ENCODE measurements at regions of chr1 and their contacts with region 1.

Region 1: GRCh38 chr1:160951443-160952128 is 3.0 kb downstream of the ITLN2 start:
- DNase-seq: peak; percentile 82
- H3K4me3 Mint-ChIP-seq: no peak overlapping the region
- H3K27ac Mint-ChIP-seq: peak overlapping the region; percentile 3
- H3K4me1 Mint-ChIP-seq: peaks cover 55% of the 10 kb centered on the region
- H3K27me3 Mint-ChIP-seq: no peaks in the 10 kb centered on the region
- CTCF ChIP-seq: peak; percentile 93

Region 2: DNA sequence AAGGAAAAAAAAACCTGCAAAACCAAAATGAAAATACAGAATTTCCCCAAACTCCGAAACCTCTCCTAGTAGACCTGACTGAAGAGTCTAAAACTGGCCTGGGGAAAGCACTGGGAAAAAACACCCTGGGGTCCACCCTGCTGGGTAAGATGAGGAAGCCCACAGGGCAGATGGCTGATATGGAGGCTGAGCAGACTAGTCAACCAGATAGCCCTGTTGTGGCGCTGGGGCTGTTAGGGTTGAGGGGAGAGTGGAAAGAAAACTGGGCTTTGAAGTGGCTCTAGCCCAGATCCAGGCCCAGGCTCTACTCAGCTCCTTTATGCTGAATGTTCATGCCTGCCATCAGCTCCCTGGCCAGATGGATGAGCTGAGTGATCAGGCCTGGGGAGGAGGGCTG is 298.0 kb before region 1 on chr1:
- CTCF ChIA-PET with region 1: no interaction called
- POLR2A ChIA-PET with region 1: no interaction called
- intact Hi-C with region 1: no loop called
- DNase-seq: no peak
- H3K4me3 Mint-ChIP-seq: no peak overlapping the region
- H3K27ac Mint-ChIP-seq: no peak overlapping the region
- H3K4me1 Mint-ChIP-seq: peaks cover 20% of the 10 kb centered on the region
- H3K27me3 Mint-ChIP-seq: no peaks in the 10 kb centered on the region
- CTCF ChIP-seq: no peak

Region 3: GRCh38 chr1:160726498-160727315 is 224.9 kb before region 1 on chr1:
- CTCF ChIA-PET with region 1: interaction called, 68 read pairs
- POLR2A ChIA-PET with region 1: interaction called, 27 read pairs
- intact Hi-C with region 1: loop called (anchors 1 kb)
- DNase-seq: peak; percentile 90
- H3K4me3 Mint-ChIP-seq: no peak overlapping the region
- H3K27ac Mint-ChIP-seq: no peak overlapping the region
- H3K4me1 Mint-ChIP-seq: no peaks in the 10 kb centered on the region
- H3K27me3 Mint-ChIP-seq: no peaks in the 10 kb centered on the region
- CTCF ChIP-seq: peak; percentile 91

Region 4: DNA sequence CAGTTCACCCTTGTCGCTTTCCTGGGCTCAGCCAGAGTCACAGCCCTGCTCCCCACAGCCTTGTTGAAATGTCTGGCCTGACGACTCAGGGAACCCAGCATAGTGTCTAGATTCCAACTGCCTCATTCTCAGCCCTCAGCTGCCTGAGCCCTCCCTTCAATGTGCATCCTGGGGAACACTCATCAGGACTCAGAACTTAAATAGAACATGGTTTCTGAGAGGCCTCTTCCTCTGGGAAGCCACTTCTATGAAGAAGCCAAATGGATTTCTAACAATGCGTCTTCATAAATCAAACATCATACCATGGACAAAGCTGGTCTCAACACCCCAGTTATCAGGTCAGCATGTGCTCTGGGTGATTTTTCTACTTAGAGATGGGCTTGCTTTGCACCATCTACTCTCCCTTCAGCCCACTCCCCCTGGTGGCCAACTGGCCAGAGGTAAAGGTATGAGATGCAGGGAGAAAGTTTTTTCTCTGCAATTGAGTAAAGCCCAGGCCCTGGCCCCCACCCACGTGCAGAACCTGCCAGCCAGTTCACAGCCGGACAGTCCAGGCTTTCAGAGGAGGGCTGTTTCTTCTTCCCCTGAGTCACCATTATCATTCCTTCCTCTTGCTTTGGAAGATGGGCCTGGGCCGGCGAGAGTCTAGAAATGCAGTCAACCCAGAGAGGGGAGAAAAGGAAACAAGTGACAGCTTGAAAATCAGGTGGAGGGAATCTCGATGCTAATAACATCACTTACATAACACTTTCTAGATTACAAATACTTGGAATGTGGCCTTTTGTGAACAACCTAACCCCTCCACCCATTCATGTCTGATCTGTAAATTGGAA is 121.0 kb before region 1 on chr1:
- CTCF ChIA-PET with region 1: interaction called, 139 read pairs
- POLR2A ChIA-PET with region 1: interaction called, 20 read pairs
- intact Hi-C with region 1: loop called (anchors 1 kb)
- DNase-seq: peak; percentile 85
- H3K4me3 Mint-ChIP-seq: no peak overlapping the region
- H3K27ac Mint-ChIP-seq: no peak overlapping the region
- H3K4me1 Mint-ChIP-seq: peaks cover 23% of the 10 kb centered on the region
- H3K27me3 Mint-ChIP-seq: no peaks in the 10 kb centered on the region
- CTCF ChIP-seq: peak; percentile 90

Region 5: DNA sequence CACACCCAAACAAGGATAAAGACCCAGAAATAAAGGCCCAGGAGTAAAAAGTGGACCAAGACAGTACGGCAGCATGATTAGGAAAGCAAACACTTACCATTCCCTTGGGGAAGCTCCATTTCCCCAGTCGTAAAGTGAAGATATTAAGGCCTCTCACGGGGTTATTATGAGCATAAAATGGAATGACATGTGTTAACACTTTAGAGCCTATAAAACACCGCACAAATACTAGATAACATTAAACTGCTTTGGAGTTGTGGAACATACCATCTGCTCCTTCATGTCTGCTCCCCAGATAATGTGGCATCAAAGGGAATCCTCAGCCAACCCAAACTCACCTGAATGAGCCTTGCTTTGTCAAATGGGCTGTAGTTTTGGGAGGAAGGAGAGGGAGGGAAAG is 11.9 kb after region 1 on chr1:
- CTCF ChIA-PET with region 1: interaction called, 17 read pairs
- POLR2A ChIA-PET with region 1: interaction called, 8 read pairs
- intact Hi-C with region 1: no loop called
- DNase-seq: no peak
- H3K4me3 Mint-ChIP-seq: no peak overlapping the region
- H3K27ac Mint-ChIP-seq: no peak overlapping the region
- H3K4me1 Mint-ChIP-seq: no peaks in the 10 kb centered on the region
- H3K27me3 Mint-ChIP-seq: no peaks in the 10 kb centered on the region
- CTCF ChIP-seq: no peak

Region 6: GRCh38 chr1:160997323-160998038 is 45.9 kb after region 1 on chr1:
- CTCF ChIA-PET with region 1: interaction called, 62 read pairs
- POLR2A ChIA-PET with region 1: interaction called, 16 read pairs
- intact Hi-C with region 1: no loop called
- DNase-seq: peak; percentile 74
- H3K4me3 Mint-ChIP-seq: no peak overlapping the region
- H3K27ac Mint-ChIP-seq: no peak overlapping the region
- H3K4me1 Mint-ChIP-seq: peaks cover 35% of the 10 kb centered on the region
- H3K27me3 Mint-ChIP-seq: no peaks in the 10 kb centered on the region
- CTCF ChIP-seq: peak; percentile 44

Region 7: DNA sequence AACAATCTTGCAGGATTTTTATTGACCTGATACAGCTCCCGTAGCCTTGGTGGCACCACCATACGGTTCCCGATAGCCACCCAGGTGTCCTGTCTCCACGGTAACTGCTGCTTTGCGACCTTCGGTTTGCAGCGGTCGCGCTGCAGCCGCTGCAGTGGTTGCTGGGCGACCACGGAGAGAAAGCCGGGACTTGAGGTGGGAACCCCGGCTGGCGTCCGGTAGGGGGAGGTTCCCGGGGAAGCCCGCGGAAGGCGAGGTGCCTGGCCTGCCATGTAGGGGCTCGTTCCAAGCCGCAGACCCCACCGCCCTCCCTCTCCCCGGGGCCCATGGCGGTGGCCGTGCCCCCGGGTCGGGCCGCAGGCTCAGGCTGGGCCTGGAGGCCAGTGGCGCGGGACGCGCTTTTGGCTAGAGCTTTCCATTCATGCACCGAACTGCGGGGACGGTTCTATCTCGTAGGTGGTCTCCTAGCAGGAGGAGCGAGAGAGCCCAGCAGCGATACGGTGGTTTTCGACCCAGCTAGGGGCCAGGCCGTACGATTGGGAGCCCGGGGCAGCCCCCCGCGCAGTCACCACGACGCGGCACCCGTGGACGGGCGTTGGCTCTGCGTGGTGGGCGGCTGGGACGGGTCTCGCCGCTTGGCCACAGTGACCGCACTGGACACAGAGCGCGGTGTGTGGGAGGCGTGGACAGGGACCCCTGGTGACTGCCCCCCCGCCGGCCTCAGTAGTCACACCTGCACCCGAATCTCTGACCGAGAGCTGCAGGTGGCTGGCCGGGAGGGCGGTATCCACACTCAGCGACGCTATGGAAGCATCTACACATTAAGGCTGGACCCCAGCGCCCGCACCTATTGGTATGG is 146.9 kb after region 1 on chr1 and contains the start of gene KLHDC9:
- CTCF ChIA-PET with region 1: interaction called, 23 read pairs
- POLR2A ChIA-PET with region 1: interaction called, 4 read pairs
- intact Hi-C with region 1: no loop called
- DNase-seq: no peak
- H3K4me3 Mint-ChIP-seq: no peak within 1 kb of the TSS
- H3K27ac Mint-ChIP-seq: peak within 1 kb of the TSS; percentile 61
- H3K4me1 Mint-ChIP-seq: peaks cover 37% of the 10 kb centered on the region
- H3K27me3 Mint-ChIP-seq: no peaks in the 10 kb centered on the region
- CTCF ChIP-seq: no peak
- total RNA-seq, gene KLHDC9: not detected in 2 replicates

Measured in MCF 10A (cell line).